Activated CD8-positive, alpha-beta T cell treated with anti-CD3 and anti-CD28 coated beads for 36 hours (primary cell): ENCODE measurements at regions of chr5 and their contacts with region 1.

Region 1: GRCh38 chr5:170333161-170333910 is 35.8 kb upstream of the LCP2 start:
- DNase-seq: peak; percentile 90
- ATAC-seq: peak; percentile 35
- H3K4me3 Mint-ChIP-seq: no peak overlapping the region
- H3K27ac Mint-ChIP-seq: no peak overlapping the region
- H3K4me1 Mint-ChIP-seq: peaks cover 30% of the 10 kb centered on the region
- H3K27me3 Mint-ChIP-seq: no peaks in the 10 kb centered on the region
- CTCF ChIP-seq: no peak

Region 2: DNA sequence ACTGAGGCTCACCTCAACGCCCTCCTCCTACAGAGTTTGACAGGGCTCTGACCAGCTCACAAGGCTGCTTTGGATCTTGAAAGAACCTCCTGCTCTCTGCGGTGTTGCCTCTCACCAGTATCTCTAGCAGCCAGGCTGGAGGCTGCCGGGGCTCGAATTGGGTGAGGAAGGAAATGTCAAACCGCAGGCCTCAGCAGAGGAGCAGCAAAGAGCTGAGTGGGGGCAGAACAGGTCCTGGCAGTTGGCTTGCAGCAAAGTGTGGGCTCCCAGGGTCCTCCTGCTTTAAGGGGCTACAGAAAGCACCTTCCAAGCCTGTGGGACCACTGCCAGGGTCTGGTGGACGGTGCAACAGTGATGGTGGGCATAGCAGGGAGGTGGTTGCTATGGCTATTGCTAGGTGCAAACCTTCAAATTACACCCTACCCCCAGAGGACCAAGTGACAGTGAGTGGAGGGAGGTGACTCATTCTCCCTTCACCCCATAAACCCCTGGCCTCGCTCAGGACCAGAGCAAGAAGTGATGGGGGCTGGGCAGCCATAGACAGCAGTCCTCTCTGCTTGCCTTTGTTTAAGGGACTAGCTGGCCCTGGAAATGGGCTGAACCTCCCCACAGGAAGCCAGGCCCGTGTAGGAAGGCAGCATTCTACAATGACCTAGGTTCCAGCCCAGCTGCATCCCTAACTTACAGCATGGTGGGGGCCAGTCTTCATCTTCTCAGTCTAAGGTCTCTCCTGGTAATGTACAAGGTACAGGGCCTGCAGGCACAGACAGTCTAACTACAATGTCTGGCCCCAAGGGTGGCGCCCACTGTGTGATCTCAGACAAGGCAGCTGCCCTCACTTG is 54.5 kb before region 1 on chr5:
- CTCF ChIA-PET with region 1: interaction called, 101 read pairs
- POLR2A ChIA-PET with region 1: interaction called, 30 read pairs
- intact Hi-C with region 1: loop called (anchors 2 kb)
- DNase-seq: peak; percentile 97
- ATAC-seq: peak; percentile 76
- H3K4me3 Mint-ChIP-seq: peak overlapping the region; percentile 43
- H3K27ac Mint-ChIP-seq: peak overlapping the region; percentile 96
- H3K4me1 Mint-ChIP-seq: peaks cover 93% of the 10 kb centered on the region
- H3K27me3 Mint-ChIP-seq: no peaks in the 10 kb centered on the region
- CTCF ChIP-seq: no peak

Region 3: DNA sequence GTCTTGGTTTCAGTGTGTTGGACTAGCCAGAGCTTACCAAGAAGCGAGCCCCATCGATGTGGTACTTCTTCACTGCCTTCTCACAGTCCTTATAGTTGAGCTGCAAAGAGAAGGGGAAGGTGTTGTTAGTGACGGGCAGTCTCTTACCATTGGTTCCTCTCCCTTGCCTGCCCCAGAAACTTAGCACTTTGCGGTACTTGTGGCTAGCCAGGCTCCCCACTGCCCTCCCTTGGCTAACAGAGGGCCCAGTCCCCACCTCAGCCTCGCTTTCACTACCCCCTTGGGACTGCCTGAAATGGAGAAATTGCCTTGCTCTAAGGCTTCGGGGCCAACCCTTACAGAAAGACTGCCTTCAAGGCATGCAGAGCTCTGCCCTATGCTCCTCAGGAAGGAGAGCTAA is 40.1 kb before region 1 on chr5:
- CTCF ChIA-PET with region 1: interaction called, 204 read pairs
- POLR2A ChIA-PET with region 1: interaction called, 186 read pairs
- intact Hi-C with region 1: no loop called
- DNase-seq: peak; percentile 89
- ATAC-seq: peak; percentile 43
- H3K4me3 Mint-ChIP-seq: peak overlapping the region; percentile 97
- H3K27ac Mint-ChIP-seq: peak overlapping the region; percentile 96
- H3K4me1 Mint-ChIP-seq: peaks cover 61% of the 10 kb centered on the region
- H3K27me3 Mint-ChIP-seq: no peaks in the 10 kb centered on the region
- CTCF ChIP-seq: no peak

Region 4: GRCh38 chr5:170312666-170313065 is 20.7 kb before region 1 on chr5:
- CTCF ChIA-PET with region 1: interaction called, 204 read pairs
- POLR2A ChIA-PET with region 1: interaction called, 86 read pairs
- intact Hi-C with region 1: loop called (anchors 1 kb)
- DNase-seq: peak; percentile 82
- ATAC-seq: peak; percentile 91
- H3K4me3 Mint-ChIP-seq: peak overlapping the region; percentile 75
- H3K27ac Mint-ChIP-seq: peak overlapping the region; percentile 87
- H3K4me1 Mint-ChIP-seq: peaks cover 66% of the 10 kb centered on the region
- H3K27me3 Mint-ChIP-seq: no peaks in the 10 kb centered on the region
- CTCF ChIP-seq: no peak